ENCODE measurements at regions of chr13 and their contacts with region 1.

Region 1: GRCh38 chr13:79320433-79320832 is 85.6 kb downstream of the RBM26 start:
- DNase-seq: no peak
- H3K4me3 Mint-ChIP-seq: no peak overlapping the region
- H3K27ac Mint-ChIP-seq: no peak overlapping the region
- H3K4me1 Mint-ChIP-seq: peaks cover 5% of the 10 kb centered on the region
- H3K27me3 Mint-ChIP-seq: no peaks in the 10 kb centered on the region

Region 2: DNA sequence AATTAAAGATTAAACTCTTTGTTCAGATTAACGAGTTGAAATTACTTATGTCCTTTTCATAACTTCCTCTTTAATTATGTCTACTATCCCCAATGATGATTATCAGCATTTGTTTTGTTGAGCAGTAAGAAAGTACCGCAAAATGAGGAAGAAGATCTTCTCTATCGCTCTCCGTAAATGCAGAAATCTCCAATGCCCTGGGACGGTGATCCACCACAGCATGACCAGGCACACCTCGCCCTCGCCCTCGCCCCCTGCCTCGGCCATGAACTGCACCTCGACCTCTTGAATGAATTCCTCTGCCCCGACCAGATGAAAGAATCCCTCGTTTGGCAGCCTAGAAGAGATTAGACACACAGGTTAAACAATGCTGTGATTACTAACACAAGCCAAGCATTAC is 16.5 kb after region 1 on chr13:
- intact Hi-C with region 1: loop called (anchors 2 kb)
- DNase-seq: no peak
- H3K4me3 Mint-ChIP-seq: no peak overlapping the region
- H3K27ac Mint-ChIP-seq: no peak overlapping the region
- H3K4me1 Mint-ChIP-seq: peaks cover 5% of the 10 kb centered on the region
- H3K27me3 Mint-ChIP-seq: no peaks in the 10 kb centered on the region

Measured in activated T-helper 1 cell treated with anti-CD3 and anti-CD28 coated beads, Interleukin-12 subunit alpha, Interleukin-12 subunit beta, Interleukin-2, Interleukin-4 antibody, amounts not matched to agents 30 ng/mL and 10 ng/mL and 1 ng/mL, durations not matched to agents 14 hours and 24 hours and 36 hours (primary cell).